AG04450 (cell line): ENCODE measurements at regions of chr16 and their contacts with region 1.

Region 1: GRCh38 chr16:31052124-31052523 is 18.8 kb downstream of the STX4 start:
- DNase-seq: peak; percentile 77
- H3K4me3 ChIP-seq: no peak overlapping the region
- H3K27ac ChIP-seq: peak overlapping the region; percentile 80
- H3K27me3 ChIP-seq: no peaks in the 10 kb centered on the region
- CTCF ChIP-seq: no peak

Region 2: DNA sequence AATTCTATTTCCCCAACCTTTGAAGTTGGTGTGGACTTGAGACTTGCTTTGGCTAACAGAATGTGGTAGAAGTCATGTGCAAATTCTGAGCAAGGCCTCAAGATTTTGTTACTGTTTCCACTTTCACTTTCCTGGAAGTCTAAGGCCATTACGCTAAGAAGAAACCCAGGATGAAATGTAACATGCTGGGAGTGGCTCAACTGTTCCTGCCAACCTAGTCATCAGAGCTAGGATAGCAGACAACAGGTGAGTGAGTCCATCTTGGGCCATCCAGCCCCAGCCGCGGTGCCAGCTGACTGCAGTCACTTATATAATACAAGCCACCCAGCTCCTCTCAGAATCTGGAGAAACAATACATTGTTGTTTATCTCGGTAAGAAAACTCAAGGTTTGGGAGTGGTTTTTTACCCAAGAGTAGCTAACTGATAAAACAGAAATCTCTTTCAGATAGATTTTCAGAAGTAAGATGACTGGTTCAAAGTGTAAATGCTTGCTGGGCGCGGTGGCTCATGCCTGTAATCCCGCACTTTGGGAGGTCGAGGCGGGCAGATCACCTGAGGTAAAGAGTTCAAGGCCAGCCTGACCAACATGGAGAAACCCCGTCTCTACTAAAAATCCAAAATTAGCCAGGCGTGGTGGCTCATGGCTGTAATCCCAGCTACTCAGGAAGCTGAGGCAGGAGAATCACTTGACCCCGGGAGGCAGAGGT is 29.4 kb before region 1 on chr16:
- CTCF ChIA-PET with region 1: no interaction called
- POLR2A ChIA-PET with region 1: no interaction called
- DNase-seq: no peak
- H3K4me3 ChIP-seq: no peak overlapping the region
- H3K27ac ChIP-seq: no peak overlapping the region
- H3K27me3 ChIP-seq: no peaks in the 10 kb centered on the region
- CTCF ChIP-seq: no peak

Region 3: DNA sequence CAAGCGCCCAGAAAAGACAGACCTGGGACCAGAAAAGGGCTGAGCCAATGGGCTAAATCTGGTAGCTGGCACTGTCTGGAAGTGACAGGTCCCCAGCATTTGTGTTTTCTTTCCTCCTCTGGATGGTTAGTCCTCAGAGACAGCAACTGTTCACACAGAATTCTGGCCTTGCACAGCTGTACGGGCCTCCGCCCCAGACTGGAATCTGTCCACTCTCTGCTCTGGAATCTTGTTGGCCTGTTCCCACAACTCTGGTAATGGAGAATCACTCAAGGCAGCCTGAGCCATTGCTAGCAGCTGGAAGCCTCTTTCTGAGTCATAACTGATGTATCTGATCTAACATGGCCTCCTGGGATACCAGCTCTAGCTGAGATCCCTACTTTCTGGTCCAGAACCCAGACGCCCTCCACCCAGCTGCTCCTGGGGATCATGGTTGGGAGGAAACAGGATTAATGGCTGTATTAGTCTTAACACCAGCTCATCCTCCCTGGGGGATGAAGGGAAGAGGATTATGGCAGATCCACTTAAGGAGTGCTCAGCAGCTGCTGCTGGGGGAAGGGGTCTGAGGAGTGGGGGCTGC is 12.8 kb after region 1 on chr16:
- CTCF ChIA-PET with region 1: no interaction called
- POLR2A ChIA-PET with region 1: interaction called, 13 read pairs
- DNase-seq: peak; percentile 89
- H3K4me3 ChIP-seq: peak overlapping the region; percentile 25
- H3K27ac ChIP-seq: peak overlapping the region; percentile 99
- H3K27me3 ChIP-seq: no peaks in the 10 kb centered on the region
- CTCF ChIP-seq: no peak

Region 4: GRCh38 chr16:31099860-31100638 is 47.9 kb after region 1 on chr16:
- CTCF ChIA-PET with region 1: no interaction called
- POLR2A ChIA-PET with region 1: interaction called, 11 read pairs
- DNase-seq: no peak
- H3K4me3 ChIP-seq: no peak overlapping the region
- H3K27ac ChIP-seq: no peak overlapping the region
- H3K27me3 ChIP-seq: no peaks in the 10 kb centered on the region
- CTCF ChIP-seq: no peak